Activated naive CD4-positive, alpha-beta T cell treated with anti-CD3 and anti-CD28 coated beads, Interleukin-2, amount 10 ng/mL, durations not matched to agents 7 days and 5 days (primary cell): ENCODE measurements at regions of chr5 and their contacts with region 1.

Region 1: GRCh38 chr5:140372971-140373487 is 13.0 kb downstream of the SLC4A9 start:
- DNase-seq: peak; percentile 61
- H3K4me3 Mint-ChIP-seq: no peak overlapping the region
- H3K27ac Mint-ChIP-seq: no peak overlapping the region
- H3K4me1 Mint-ChIP-seq: peaks cover 3% of the 10 kb centered on the region
- H3K27me3 Mint-ChIP-seq: no peaks in the 10 kb centered on the region

Region 2: GRCh38 chr5:140182803-140183367 is 190.1 kb before region 1 on chr5:
- CTCF ChIA-PET with region 1: no interaction called
- DNase-seq: no peak
- H3K4me3 Mint-ChIP-seq: no peak overlapping the region
- H3K27ac Mint-ChIP-seq: no peak overlapping the region
- H3K4me1 Mint-ChIP-seq: peaks cover 4% of the 10 kb centered on the region
- H3K27me3 Mint-ChIP-seq: peaks cover 5% of the 10 kb centered on the region

Region 3: DNA sequence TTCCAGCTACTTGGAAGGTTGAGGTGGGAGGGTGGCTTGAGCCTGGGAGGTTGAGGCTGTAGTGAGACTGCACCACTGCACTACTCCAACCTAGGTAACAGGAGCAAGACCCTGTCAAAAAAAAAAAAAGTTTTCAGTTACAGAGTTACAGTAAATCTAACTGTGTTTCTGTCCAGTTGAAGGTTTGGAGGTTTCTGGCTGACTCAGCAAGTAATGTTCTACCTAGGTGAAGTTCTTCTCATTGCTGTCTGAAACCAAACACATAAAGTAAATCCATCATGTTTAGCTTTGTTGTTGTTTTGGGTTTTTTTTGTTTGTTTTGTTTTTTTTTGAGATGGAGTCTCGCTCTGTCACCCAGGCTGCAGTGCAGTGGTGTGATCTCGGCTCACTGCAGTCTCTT is 20.7 kb after region 1 on chr5:
- CTCF ChIA-PET with region 1: interaction called, 11 read pairs
- DNase-seq: no peak
- H3K4me3 Mint-ChIP-seq: no peak overlapping the region
- H3K27ac Mint-ChIP-seq: no peak overlapping the region
- H3K4me1 Mint-ChIP-seq: no peaks in the 10 kb centered on the region
- H3K27me3 Mint-ChIP-seq: no peaks in the 10 kb centered on the region

Region 4: DNA sequence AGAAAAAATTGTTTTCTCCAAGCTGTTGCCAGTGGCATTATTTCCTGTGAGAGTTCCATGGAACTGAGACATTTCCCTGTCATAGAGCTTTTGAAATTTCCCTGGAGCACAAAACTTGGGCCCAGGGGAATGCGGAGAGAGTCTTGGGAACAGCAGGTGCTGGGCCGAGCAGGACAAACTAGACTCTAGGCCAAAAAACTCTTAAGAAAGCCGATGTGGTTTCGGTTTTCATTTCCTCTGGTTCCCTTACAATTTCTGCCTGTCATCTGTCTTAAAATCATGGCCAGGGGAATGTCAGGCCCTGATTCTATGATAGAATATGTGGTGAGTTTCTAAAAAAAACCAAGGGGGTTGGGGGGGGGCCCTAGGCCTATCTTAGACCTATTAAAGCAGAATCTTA is 196.2 kb after region 1 on chr5:
- CTCF ChIA-PET with region 1: no interaction called
- DNase-seq: peak; percentile 38
- H3K4me3 Mint-ChIP-seq: peak overlapping the region; percentile 60
- H3K27ac Mint-ChIP-seq: peak overlapping the region; percentile 96
- H3K4me1 Mint-ChIP-seq: peaks cover 54% of the 10 kb centered on the region
- H3K27me3 Mint-ChIP-seq: no peaks in the 10 kb centered on the region

Region 5: DNA sequence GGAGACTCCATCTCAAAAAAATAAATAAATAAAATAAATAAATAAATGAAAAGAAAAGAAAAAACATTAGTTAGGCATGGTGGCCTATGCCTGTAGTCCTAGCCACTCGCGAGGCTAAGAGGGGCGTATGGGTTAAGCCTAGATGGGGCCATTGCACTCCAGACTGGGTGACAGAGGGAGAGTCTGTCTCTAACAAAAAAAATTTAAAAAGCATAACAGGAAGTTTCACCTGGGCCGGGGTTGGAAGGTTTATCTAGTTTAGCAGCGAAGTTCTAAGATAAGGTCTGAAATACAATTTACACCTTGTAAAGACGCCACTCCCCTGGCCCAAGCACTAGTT is 345.2 kb after region 1 on chr5:
- CTCF ChIA-PET with region 1: interaction called, 22 read pairs
- DNase-seq: no peak
- H3K4me3 Mint-ChIP-seq: no peak overlapping the region
- H3K27ac Mint-ChIP-seq: no peak overlapping the region
- H3K4me1 Mint-ChIP-seq: peaks cover 6% of the 10 kb centered on the region
- H3K27me3 Mint-ChIP-seq: peaks cover 19% of the 10 kb centered on the region

Region 6: DNA sequence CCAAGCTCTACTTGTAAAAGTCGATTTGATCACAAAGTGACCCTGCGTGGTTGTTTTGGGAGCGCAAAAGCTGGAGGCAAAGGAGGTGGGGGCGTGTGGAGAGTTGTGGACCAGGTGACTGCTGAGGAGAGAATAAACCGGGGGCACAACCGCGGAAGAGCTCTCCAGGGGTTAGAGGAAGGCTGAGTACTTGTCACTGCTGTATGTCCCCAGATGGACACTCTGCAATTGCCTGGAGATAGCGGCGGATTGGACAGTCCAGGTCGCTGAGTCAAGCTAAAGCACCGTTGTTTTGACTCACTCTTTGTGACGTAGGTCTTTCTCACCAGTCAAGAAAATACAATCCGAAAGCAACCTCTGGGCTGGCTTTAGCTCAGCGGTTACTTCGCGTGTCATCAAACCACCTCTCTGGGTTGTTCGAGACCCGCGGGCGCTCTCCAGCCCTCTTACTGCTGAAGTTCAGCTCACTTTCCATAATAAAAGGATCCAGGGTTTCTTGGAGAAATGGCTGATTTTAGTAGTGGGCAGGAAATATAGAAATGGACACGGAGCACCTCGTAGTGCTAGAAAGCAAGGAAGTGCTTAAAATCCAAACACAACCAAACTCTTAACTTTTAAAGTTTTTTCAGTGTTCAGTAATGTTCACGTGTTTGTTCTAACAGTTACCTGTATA is 352.9 kb after region 1 on chr5:
- CTCF ChIA-PET with region 1: interaction called, 22 read pairs
- DNase-seq: peak; percentile 79
- H3K4me3 Mint-ChIP-seq: peak overlapping the region; percentile 71
- H3K27ac Mint-ChIP-seq: peak overlapping the region; percentile 45
- H3K4me1 Mint-ChIP-seq: peaks cover 15% of the 10 kb centered on the region
- H3K27me3 Mint-ChIP-seq: peaks cover 42% of the 10 kb centered on the region